Activated T-helper 2 cell treated with anti-CD3 and anti-CD28 coated beads, Interferon-gamma antibody, Interleukin-2, Interleukin-4, amounts not matched to agents 10 μg/mL and 5 μg/mL and 100 μg/mL, durations not matched to agents 14 hours and 24 hours and 36 hours (primary cell): ENCODE measurements at regions of chr2 and their contacts with region 1.

Region 1: DNA sequence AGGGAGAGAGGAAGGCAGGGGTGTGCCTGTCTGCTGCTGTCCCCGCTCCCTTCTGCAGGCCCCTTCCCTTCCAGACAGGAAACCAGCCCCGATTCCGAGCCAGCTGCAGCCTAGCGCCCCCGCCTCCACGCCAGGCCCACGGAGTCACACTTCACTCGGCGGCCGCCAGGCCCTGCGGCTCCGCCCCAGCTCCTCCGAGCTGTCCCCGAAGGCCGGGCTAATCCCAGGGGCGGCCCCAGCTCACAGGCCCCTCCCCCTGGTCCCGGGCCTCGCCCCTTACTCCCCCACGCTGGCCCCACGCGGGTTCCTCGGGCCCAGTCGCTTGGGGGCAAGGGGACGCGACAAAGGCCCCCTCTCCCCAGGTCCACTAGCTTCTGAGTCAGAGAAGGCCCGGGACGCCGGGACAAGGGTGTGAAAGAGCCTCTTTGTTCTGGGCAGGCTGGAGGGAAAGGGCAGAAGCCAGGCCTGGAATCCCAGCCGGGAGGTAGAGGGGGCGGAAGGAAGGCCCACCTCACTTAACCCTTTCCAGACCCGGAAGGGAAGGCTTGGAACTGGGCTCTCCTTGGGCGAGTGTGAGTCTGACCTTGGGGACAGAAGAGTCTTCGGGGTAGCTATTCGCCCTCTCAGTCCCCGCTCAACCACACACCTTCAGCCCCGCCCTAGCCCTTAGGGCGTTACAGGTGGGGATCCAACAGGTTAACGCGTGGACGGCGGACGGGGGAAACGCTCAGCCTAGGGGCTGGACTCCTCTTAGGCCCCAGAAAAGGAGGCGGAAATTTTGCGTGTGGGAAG is 1.2 kb downstream of the RTKN start:
- DNase-seq: no peak
- H3K4me3 Mint-ChIP-seq: peak overlapping the region; percentile 51
- H3K27ac Mint-ChIP-seq: no peak overlapping the region
- H3K4me1 Mint-ChIP-seq: peaks cover 10% of the 10 kb centered on the region
- H3K27me3 Mint-ChIP-seq: peaks cover 35% of the 10 kb centered on the region

Region 2: DNA sequence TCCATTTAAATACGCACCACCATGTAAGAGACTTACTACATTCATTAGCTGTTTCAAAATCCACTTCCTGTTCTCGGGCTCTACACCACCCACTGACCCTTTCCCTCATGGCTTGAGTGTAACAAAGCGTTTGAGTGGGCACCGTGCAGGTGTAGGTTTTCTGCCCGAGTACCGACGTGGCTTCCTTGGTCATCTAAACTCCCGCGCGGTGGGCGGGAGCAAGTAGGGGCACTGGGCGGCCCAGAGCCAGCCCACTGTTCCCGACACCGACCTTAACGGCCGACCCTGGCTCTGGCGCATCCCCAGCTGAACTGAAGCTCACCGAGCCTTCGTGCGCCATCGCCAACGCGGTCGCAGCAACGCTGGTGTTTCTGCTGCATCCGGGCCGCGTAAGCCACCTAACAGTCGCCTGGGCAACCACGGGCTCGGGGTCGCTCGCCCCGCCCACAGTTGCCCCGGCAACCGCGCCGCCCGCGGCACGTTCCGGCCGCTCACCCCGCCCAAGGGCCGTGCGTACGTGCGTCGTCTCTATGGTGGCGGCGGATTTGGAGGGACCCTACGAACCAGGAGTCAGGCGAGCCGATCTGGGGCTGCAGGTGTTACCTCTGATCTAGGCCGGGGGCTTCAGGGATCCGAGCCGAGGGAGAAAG is 19.2 kb before region 1 on chr2 and contains the starts of genes C2orf81 and WDR54:
- intact Hi-C with region 1: loop called (anchors 2 kb)
- DNase-seq: peak; percentile 94
- H3K4me3 Mint-ChIP-seq: peak within 1 kb of the TSS; percentile 100
- H3K27ac Mint-ChIP-seq: peak within 1 kb of the TSS; percentile 100
- H3K4me1 Mint-ChIP-seq: peaks cover 15% of the 10 kb centered on the region
- H3K27me3 Mint-ChIP-seq: peaks cover 2% of the 10 kb centered on the region
- total RNA-seq, gene C2orf81: 1.6 and 1.9 TPM in 2 replicates
- total RNA-seq, gene WDR54: 76.7 and 78.0 TPM in 2 replicates